Activated CD4-positive, alpha-beta T cell treated with anti-CD3 and anti-CD28 coated beads, Interleukin-2, amount 10 ng/mL, durations not matched to agents 7 days and 5 days (primary cell): ENCODE measurements at regions of chr14 and their contacts with region 1.

Region 1: DNA sequence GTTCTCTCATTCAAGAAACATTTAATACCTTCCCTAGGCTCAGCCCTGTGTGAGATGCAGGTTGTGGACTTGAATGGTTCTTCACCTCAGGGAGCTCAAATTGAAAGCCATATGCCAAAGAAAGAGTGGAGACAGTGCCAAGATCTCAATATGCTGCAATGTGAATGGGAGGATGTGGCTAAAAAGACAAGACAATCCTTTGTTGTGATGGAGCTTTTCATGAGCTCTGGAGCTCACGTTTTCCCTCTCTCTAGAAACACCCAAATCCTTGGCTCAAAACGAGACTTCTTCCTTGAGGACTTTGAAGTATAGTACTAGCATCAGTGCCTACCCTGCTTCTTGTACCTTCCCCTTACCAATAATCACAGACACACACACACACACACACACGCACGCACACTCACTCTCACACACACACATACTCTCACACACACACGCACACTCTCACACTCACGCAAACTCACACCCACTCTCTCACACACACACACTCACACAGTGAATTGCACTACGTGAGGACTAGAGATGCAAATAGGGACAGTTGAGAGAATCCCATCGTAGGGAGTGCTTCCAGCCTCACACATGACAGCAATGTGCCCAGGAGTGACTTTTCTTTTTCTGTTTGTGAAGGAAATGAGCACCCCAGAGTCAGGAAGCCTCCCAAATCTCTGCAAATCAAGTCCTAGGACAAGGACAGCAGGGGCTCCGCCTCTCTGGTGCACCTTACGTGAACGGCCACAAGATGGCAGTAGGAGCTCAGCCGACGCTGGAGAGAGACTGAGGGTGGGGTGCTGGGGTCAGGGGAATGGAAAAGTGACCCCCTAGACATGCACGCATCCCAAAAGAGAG is 231.4 kb downstream of the PCNX1 start:
- DNase-seq: peak; percentile 59
- H3K4me3 Mint-ChIP-seq: no peak overlapping the region
- H3K27ac Mint-ChIP-seq: no peak overlapping the region
- H3K4me1 Mint-ChIP-seq: peaks cover 35% of the 10 kb centered on the region
- H3K27me3 Mint-ChIP-seq: no peaks in the 10 kb centered on the region

Region 2: GRCh38 chr14:71753126-71753830 is 614.6 kb after region 1 on chr14:
- CTCF ChIA-PET with region 1: interaction called, 19 read pairs
- POLR2A ChIA-PET with region 1: no interaction called
- DNase-seq: peak; percentile 72
- H3K4me3 Mint-ChIP-seq: no peak overlapping the region
- H3K27ac Mint-ChIP-seq: no peak overlapping the region
- H3K4me1 Mint-ChIP-seq: peaks cover 9% of the 10 kb centered on the region
- H3K27me3 Mint-ChIP-seq: peaks cover 2% of the 10 kb centered on the region